Mammary epithelial cell (primary cell): ENCODE measurements at regions of chr15 and their contacts with region 1.

Region 1: GRCh38 chr15:89129123-89129815 is 41.0 kb downstream of the ABHD2 start:
- DNase-seq: peak; percentile 29
- H3K4me3 ChIP-seq: no peak overlapping the region
- H3K27ac ChIP-seq: peak overlapping the region; percentile 0
- H3K4me1 ChIP-seq: peaks cover 30% of the 10 kb centered on the region
- H3K27me3 ChIP-seq: no peaks in the 10 kb centered on the region
- CTCF ChIP-seq: peak; percentile 62 to 77

Region 2: GRCh38 chr15:88913017-88913849 is 216.0 kb before region 1 on chr15 and contains the start of gene MFGE8:
- CTCF ChIA-PET with region 1: no interaction called
- dilution Hi-C with region 1: no loop called
- in situ Hi-C with region 1: no loop called
- intact Hi-C with region 1: no loop called
- DNase-seq: peak; percentile 81
- H3K4me3 ChIP-seq: peak within 1 kb of the TSS; percentile 62 to 85 (median 72)
- H3K27ac ChIP-seq: peak within 1 kb of the TSS; percentile 84
- H3K4me1 ChIP-seq: peaks cover 18% of the 10 kb centered on the region
- H3K27me3 ChIP-seq: no peaks in the 10 kb centered on the region
- CTCF ChIP-seq: no peak
- total RNA-seq, gene MFGE8: 81.4 to 145 TPM

Region 3: GRCh38 chr15:89087830-89088604 is 41.3 kb before region 1 on chr15 and contains the start of gene ABHD2:
- CTCF ChIA-PET with region 1: interaction called, 5 read pairs
- dilution Hi-C with region 1: no loop called
- in situ Hi-C with region 1: no loop called
- intact Hi-C with region 1: loop called (anchors 1 kb)
- DNase-seq: peak; percentile 100
- H3K4me3 ChIP-seq: peak within 1 kb of the TSS; percentile 77 to 89 (median 87)
- H3K27ac ChIP-seq: peak within 1 kb of the TSS; percentile 66
- H3K4me1 ChIP-seq: peaks cover 25% of the 10 kb centered on the region
- H3K27me3 ChIP-seq: no peaks in the 10 kb centered on the region
- CTCF ChIP-seq: no peak
- total RNA-seq, gene ABHD2: 35.3 to 47.4 TPM